ENCODE measurements at regions of chr19 and their contacts with region 1.

Region 1: GRCh38 chr19:44752816-44753618 is 4.5 kb downstream of the BCL3 start:
- DNase-seq: peak; percentile 98 to 100 (median 100)
- H3K4me3 ChIP-seq: peak overlapping the region in 6 of 7 experiments; percentile 25 to 92 (median 59)
- H3K27ac ChIP-seq: peak overlapping the region; percentile 36 to 88
- H3K4me1 ChIP-seq: peaks cover 22 to 82% (median 78%) of the 10 kb centered on the region in 4 experiments
- H3K27me3 ChIP-seq: no peaks in the 10 kb centered on the region

Region 2: DNA sequence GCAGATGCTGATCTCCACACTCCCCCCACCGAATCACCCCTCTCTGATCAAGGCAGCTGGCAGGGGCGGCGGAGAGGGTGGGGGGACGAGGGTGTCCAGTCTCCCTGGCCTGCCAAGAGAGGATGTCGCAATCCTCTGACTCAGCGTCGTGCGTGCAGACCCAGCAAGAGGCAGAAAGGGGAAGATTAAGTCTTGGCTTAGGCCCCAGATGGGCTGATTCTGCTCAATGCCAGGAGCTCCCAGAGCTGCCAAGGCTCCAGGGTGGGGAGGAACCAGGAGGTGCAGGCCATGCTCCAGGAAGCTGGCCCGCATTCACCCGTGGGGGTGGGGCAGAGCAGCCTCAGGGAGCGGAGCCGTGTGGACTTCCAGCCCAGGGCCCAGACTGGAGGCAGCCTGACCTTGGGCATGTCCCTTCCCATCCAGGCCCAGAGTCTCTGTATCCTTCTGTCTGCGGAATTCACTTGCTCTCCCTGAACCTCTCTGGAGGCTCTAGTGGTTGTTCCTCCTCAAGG is 11.1 kb before region 1 on chr19:
- CTCF ChIA-PET with region 1: interaction called, 16 read pairs
- POLR2A ChIA-PET with region 1: interaction called, 16 read pairs
- DNase-seq: peak; percentile 95 to 98 (median 98)
- H3K4me3 ChIP-seq: peak overlapping the region in 1 of 7 experiments; percentile 48
- H3K27ac ChIP-seq: peak overlapping the region; percentile 33 to 79
- H3K4me1 ChIP-seq: peaks cover 17 to 84% (median 52%) of the 10 kb centered on the region in 4 experiments
- H3K27me3 ChIP-seq: no peaks in the 10 kb centered on the region

Region 3: DNA sequence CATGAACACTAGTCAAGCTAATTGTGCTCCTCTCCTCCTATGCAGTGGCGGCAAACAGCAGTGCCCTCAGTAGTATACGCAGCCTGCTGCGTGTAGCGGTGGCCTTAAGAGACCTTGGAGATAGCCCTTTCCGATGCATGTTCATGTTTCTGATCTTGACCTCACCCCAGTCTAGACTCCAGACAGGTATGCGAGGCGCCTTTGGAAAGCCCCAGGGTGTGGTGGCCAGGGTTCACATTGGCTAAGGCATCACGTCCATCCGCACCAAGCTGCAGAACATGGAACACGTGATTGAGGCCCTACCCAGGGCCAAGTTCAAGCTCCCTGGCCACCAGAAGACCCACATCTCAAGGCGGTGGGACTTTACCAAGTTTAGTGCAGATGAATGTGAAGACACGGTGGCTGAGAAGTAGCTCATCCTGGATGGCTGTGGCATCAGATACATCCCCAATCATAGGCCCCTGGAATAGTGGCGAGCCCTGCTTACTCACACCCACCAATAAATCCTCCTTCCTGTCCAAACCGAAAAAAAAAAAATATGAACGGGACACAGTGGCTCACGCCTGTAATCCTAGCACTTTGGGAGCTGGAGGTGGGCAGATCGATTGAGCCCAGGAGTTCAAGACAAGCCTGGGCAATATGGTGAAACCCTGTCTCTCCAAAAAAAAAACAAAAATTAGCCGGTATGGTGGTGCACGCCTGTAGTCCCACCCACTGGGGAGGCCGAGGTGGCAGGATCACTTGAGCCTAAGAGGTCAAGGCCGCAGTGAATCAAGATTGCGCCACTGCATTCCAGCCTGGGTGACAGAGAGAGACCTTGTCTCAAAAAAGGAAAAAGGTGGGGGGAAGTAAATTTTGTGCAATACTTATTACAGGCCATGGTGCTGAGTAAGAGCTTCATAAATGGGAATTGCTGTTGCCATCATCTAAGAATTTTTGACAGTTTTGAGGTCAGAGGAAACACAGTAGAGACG is 12.2 kb after region 1 on chr19:
- CTCF ChIA-PET with region 1: interaction called, 26 read pairs
- POLR2A ChIA-PET with region 1: interaction called, 36 read pairs
- DNase-seq: peak in 2 of 3 donors; percentile 47 to 50
- H3K4me3 ChIP-seq: no peak overlapping the region
- H3K27ac ChIP-seq: no peak overlapping the region
- H3K4me1 ChIP-seq: peaks cover 3 to 48% (median 25%) of the 10 kb centered on the region in 4 experiments
- H3K27me3 ChIP-seq: no peaks in the 10 kb centered on the region

Measured in common myeloid progenitor, CD34-positive (primary cell).